B cell (primary cell): ENCODE measurements at regions of chr1 and their contacts with region 1.

Region 1: DNA sequence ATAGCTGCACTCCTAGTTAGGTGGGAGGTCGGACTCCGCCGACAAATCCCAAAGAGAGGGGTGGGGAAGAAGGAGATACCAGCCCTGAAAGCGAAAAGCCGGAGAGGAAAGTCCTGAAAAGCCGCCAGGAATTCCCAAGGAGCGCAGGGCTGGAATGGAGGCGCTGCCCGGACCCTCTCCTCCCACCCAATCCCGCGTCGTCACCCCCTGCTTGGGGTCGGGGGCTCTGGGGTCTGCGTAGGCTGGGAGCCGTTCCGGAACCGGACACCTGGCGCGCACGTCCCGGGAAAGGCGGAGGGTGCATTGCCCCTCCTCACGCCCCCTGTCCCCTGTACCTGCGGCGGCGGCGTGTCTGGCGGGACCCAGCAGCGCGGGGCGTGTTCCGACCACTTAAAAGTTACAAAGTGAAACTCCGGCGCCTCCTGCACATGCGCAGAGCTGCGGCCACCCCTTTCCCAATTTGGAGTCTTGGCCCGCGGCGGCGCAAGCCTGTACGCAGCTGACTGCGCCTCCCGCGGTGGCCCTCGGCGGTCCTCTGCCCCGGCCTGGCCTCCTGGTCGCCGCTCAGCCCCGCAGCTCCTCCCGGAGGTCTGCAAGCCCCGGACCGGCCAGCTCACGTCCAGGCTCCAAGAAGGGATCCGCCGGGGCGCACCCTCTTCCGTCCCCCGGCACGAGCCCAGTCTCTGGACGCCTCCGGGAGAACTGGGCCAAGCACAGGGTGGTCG is at the start of gene TMEM63A:
- DNase-seq: peak; percentile 91
- ATAC-seq: peak; percentile 78
- H3K4me3 ChIP-seq: peak within 1 kb of the TSS; percentile 86 to 99 (median 96)
- H3K4me3 Mint-ChIP-seq: peak within 1 kb of the TSS; percentile 96
- H3K27ac ChIP-seq: peak within 1 kb of the TSS; percentile 51 to 74
- H3K27ac Mint-ChIP-seq: peak within 1 kb of the TSS; percentile 91
- H3K4me1 ChIP-seq: peaks cover 30 to 42% of the 10 kb centered on the region in 2 donors
- H3K4me1 Mint-ChIP-seq: peaks cover 48% of the 10 kb centered on the region
- H3K27me3 ChIP-seq: no peaks in the 10 kb centered on the region
- H3K27me3 Mint-ChIP-seq: no peaks in the 10 kb centered on the region
- CTCF ChIP-seq: peak; percentile 23
- total RNA-seq, gene TMEM63A: 238 and 267 TPM in 2 replicates

Region 2: GRCh38 chr1:225845571-225846259 is 36.4 kb before region 1 on chr1:
- CTCF ChIA-PET with region 1: interaction called, 7 read pairs
- POLR2A ChIA-PET with region 1: interaction called, 9 read pairs
- intact Hi-C with region 1: loop called (anchors 2 kb)
- DNase-seq: no peak
- ATAC-seq: no peak
- H3K4me3 ChIP-seq: no peak overlapping the region
- H3K4me3 Mint-ChIP-seq: no peak overlapping the region
- H3K27ac ChIP-seq: peak overlapping the region in 1 of 2 donors; percentile 87
- H3K27ac Mint-ChIP-seq: peak overlapping the region; percentile 98
- H3K4me1 ChIP-seq: peaks cover 41 to 47% of the 10 kb centered on the region in 2 donors
- H3K4me1 Mint-ChIP-seq: peaks cover 47% of the 10 kb centered on the region
- H3K27me3 ChIP-seq: no peaks in the 10 kb centered on the region
- H3K27me3 Mint-ChIP-seq: no peaks in the 10 kb centered on the region
- CTCF ChIP-seq: no peak